ENCODE measurements at regions of chr4 and their contacts with region 1.

Region 1: DNA sequence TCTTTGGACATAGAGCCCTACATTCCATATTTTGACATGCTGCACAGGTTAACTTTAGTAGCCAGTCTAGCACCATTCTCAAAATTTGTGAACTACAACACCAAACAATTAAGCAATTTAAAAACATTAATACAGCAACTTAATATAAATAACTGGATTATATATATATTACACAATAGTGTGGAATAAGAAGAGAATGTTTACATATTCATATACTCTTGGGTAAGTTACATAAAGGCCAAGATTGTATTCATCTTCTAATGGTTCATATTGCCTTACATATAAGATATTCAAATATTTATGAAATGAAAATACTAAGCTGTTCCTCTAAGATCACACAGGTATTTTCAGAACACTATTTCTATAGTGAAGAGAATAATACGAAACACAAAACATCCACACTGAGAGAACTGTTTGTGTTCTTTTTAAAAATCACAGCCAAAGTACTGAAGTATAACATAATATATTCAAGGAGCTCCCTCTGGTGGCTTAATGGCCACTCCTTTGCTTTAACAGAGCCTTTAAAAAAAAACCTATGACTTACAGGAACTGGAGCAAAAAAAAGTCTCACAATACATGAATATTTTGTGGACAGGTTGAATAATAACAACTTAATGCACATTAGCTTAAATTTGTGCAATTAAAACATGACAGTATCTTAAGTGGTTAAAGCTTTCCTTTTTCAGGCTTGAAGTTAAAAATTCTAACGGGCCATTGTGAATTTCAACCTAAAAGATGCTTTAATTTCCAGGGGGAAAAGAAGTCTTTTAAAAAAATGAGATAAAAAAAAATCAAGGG is 46.2 kb downstream of the NEK1 start:
- DNase-seq: peak in 15 of 35 experiments; percentile 4 to 60 (median 14)
- ATAC-seq: peak in 2 of 4 experiments; percentile 40 to 57
- H3K4me3 ChIP-seq: no peak overlapping the region
- H3K4me3 Mint-ChIP-seq: no peak overlapping the region
- H3K27ac ChIP-seq: no peak overlapping the region
- H3K27ac Mint-ChIP-seq: peak overlapping the region in 1 of 2 donors; percentile 79
- H3K4me1 ChIP-seq: no peaks in the 10 kb centered on the region
- H3K4me1 Mint-ChIP-seq: peaks cover 5 to 6% (median 6%) of the 10 kb centered on the region in 3 donors
- H3K27me3 ChIP-seq: no peaks in the 10 kb centered on the region
- H3K27me3 Mint-ChIP-seq: no peaks in the 10 kb centered on the region

Region 2: DNA sequence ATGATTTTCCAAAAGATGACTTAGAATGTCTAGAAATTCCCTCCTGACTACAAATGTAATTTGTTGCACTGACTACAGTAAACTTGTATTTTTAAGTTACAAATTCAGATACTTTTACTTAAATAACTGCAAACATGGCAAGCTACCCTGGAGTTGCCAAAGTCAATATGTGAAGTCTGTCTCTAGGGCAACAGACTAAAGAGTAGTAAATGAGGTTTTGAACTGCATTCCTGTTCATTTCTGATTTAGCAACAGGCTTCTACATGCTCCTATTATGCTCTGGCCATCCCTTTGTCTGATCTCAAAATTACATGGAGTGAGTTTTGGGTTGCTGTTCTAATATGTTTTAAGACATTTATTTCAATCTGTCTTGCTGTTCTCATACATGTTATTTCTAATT is 322.4 kb before region 1 on chr4:
- CTCF ChIA-PET with region 1: no interaction called
- POLR2A ChIA-PET with region 1: no interaction called
- DNase-seq: no peak
- ATAC-seq: no peak
- H3K4me3 ChIP-seq: no peak overlapping the region
- H3K4me3 Mint-ChIP-seq: no peak overlapping the region
- H3K27ac ChIP-seq: no peak overlapping the region
- H3K27ac Mint-ChIP-seq: no peak overlapping the region
- H3K4me1 ChIP-seq: no peaks in the 10 kb centered on the region
- H3K4me1 Mint-ChIP-seq: no peaks in the 10 kb centered on the region
- H3K27me3 ChIP-seq: no peaks in the 10 kb centered on the region
- H3K27me3 Mint-ChIP-seq: peaks cover 8 to 12% of the 10 kb centered on the region in 2 donors

Region 3: GRCh38 chr4:169484485-169484884 is 81.7 kb before region 1 on chr4:
- CTCF ChIA-PET with region 1: no interaction called
- POLR2A ChIA-PET with region 1: no interaction called
- DNase-seq: no peak
- ATAC-seq: no peak
- H3K4me3 ChIP-seq: no peak overlapping the region
- H3K4me3 Mint-ChIP-seq: no peak overlapping the region
- H3K27ac ChIP-seq: no peak overlapping the region
- H3K27ac Mint-ChIP-seq: no peak overlapping the region
- H3K4me1 ChIP-seq: no peaks in the 10 kb centered on the region
- H3K4me1 Mint-ChIP-seq: peaks cover 0 to 2% (median 1%) of the 10 kb centered on the region in 3 donors
- H3K27me3 ChIP-seq: no peaks in the 10 kb centered on the region
- H3K27me3 Mint-ChIP-seq: no peaks in the 10 kb centered on the region

Region 4: DNA sequence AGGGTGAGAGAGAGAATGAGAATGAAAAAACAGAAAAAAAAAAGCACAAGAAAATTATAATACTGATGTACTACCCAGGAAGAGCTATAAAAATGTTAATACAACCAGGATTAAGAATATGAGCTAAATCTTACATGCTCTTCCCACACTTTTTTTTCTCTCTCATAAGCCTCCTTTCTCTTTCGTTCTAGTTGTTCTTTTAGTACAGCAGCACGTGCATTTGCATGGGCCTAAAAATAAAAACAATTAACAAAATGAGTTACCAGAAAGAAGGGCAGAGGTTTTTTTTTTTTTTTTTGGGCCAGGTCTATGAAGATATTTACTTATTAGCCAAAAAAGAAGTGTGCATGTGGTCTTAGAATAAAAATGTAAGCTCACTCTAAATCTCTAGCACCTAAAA is 59.3 kb before region 1 on chr4:
- CTCF ChIA-PET with region 1: no interaction called
- POLR2A ChIA-PET with region 1: no interaction called
- DNase-seq: no peak
- ATAC-seq: no peak
- H3K4me3 ChIP-seq: no peak overlapping the region
- H3K4me3 Mint-ChIP-seq: no peak overlapping the region
- H3K27ac ChIP-seq: no peak overlapping the region
- H3K27ac Mint-ChIP-seq: no peak overlapping the region
- H3K4me1 ChIP-seq: no peaks in the 10 kb centered on the region
- H3K4me1 Mint-ChIP-seq: peaks cover 0 to 4% (median 0%) of the 10 kb centered on the region in 3 donors
- H3K27me3 ChIP-seq: no peaks in the 10 kb centered on the region
- H3K27me3 Mint-ChIP-seq: no peaks in the 10 kb centered on the region

Region 5: GRCh38 chr4:169582205-169582604 is 16.0 kb after region 1 on chr4:
- CTCF ChIA-PET with region 1: no interaction called
- POLR2A ChIA-PET with region 1: interaction called, 4 to 12 read pairs
- DNase-seq: no peak
- ATAC-seq: no peak
- H3K4me3 ChIP-seq: no peak overlapping the region
- H3K4me3 Mint-ChIP-seq: no peak overlapping the region
- H3K27ac ChIP-seq: no peak overlapping the region
- H3K27ac Mint-ChIP-seq: no peak overlapping the region
- H3K4me1 ChIP-seq: no peaks in the 10 kb centered on the region
- H3K4me1 Mint-ChIP-seq: no peaks in the 10 kb centered on the region
- H3K27me3 ChIP-seq: no peaks in the 10 kb centered on the region
- H3K27me3 Mint-ChIP-seq: no peaks in the 10 kb centered on the region